HCT116 (cell line): ENCODE measurements at regions of chr5 and their contacts with region 1.

Region 1: GRCh38 chr5:13957032-13957645 is 12.7 kb upstream of the DNAH5 start:
- DNase-seq: peak; percentile 41
- ATAC-seq: peak; percentile 96
- H3K4me3 ChIP-seq: no peak overlapping the region
- H3K27ac ChIP-seq: no peak overlapping the region
- H3K4me1 ChIP-seq: peaks cover 0 to 7% of the 10 kb centered on the region in 2 experiments; a peak in 1 of 4 replicates
- H3K27me3 ChIP-seq: peaks cover 3% of the 10 kb centered on the region; the same call in 1 of the 2 replicates
- CTCF ChIP-seq: peak; percentile 18 to 87 (median 67); a peak in 5 of 6 replicates
- POLR2A ChIP-seq: no peak
- RAD21 ChIP-seq: peak; percentile 68

Region 2: GRCh38 chr5:12292610-12293204 is 1664.4 kb before region 1 on chr5:
- CTCF ChIA-PET with region 1: no interaction called
- POLR2A ChIA-PET with region 1: no interaction called
- RAD21 ChIA-PET with region 1: no interaction called
- intact Hi-C with region 1: loop called (anchors 10 kb)
- DNase-seq: no peak
- ATAC-seq: no peak
- H3K4me3 ChIP-seq: no peak overlapping the region
- H3K27ac ChIP-seq: no peak overlapping the region
- H3K4me1 ChIP-seq: no peaks in the 10 kb centered on the region
- H3K27me3 ChIP-seq: no peaks in the 10 kb centered on the region
- CTCF ChIP-seq: no peak; a peak in 1 of 6 replicates
- POLR2A ChIP-seq: no peak
- RAD21 ChIP-seq: no peak

Region 3: GRCh38 chr5:13785781-13786415 is 171.2 kb before region 1 on chr5:
- CTCF ChIA-PET with region 1: no interaction called
- POLR2A ChIA-PET with region 1: no interaction called
- RAD21 ChIA-PET with region 1: no interaction called
- intact Hi-C with region 1: no loop called
- DNase-seq: no peak
- ATAC-seq: no peak
- H3K4me3 ChIP-seq: no peak overlapping the region
- H3K27ac ChIP-seq: no peak overlapping the region
- H3K4me1 ChIP-seq: no peaks in the 10 kb centered on the region
- H3K27me3 ChIP-seq: no peaks in the 10 kb centered on the region
- CTCF ChIP-seq: no peak
- POLR2A ChIP-seq: no peak
- RAD21 ChIP-seq: no peak

Region 4: DNA sequence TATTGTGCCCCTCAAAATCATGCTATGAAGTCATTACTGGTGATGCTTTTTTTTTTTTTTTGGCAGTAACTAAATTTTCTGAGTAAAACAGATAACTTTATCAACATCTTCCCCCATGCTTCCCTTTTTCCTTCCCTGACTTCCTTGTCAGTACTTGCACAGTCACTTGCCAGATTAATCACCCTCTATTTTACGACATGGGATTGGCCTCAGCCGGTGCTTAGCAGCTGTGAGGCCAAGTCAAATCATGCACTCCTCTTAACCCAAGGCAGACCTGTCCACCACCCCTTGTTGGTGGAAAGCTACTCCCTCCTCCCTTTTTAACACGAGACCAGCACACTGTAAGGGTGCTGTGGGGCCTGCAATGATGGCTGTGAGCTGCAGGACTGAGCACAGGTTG is 506.5 kb after region 1 on chr5:
- CTCF ChIA-PET with region 1: no interaction called
- POLR2A ChIA-PET with region 1: no interaction called
- RAD21 ChIA-PET with region 1: no interaction called
- intact Hi-C with region 1: no loop called
- DNase-seq: no peak
- ATAC-seq: peak; percentile 54
- H3K4me3 ChIP-seq: no peak overlapping the region
- H3K27ac ChIP-seq: peak overlapping the region; percentile 35
- H3K4me1 ChIP-seq: peaks cover 0 to 10% of the 10 kb centered on the region in 2 experiments; a peak in 2 of 4 replicates
- H3K27me3 ChIP-seq: no peaks in the 10 kb centered on the region
- CTCF ChIP-seq: no peak
- POLR2A ChIP-seq: no peak
- RAD21 ChIP-seq: no peak